Activated B cell treated with CpG ODN at 0.5 μM for 24 hours (primary cell): ENCODE measurements at regions of chr3 and their contacts with region 1.

Region 1: DNA sequence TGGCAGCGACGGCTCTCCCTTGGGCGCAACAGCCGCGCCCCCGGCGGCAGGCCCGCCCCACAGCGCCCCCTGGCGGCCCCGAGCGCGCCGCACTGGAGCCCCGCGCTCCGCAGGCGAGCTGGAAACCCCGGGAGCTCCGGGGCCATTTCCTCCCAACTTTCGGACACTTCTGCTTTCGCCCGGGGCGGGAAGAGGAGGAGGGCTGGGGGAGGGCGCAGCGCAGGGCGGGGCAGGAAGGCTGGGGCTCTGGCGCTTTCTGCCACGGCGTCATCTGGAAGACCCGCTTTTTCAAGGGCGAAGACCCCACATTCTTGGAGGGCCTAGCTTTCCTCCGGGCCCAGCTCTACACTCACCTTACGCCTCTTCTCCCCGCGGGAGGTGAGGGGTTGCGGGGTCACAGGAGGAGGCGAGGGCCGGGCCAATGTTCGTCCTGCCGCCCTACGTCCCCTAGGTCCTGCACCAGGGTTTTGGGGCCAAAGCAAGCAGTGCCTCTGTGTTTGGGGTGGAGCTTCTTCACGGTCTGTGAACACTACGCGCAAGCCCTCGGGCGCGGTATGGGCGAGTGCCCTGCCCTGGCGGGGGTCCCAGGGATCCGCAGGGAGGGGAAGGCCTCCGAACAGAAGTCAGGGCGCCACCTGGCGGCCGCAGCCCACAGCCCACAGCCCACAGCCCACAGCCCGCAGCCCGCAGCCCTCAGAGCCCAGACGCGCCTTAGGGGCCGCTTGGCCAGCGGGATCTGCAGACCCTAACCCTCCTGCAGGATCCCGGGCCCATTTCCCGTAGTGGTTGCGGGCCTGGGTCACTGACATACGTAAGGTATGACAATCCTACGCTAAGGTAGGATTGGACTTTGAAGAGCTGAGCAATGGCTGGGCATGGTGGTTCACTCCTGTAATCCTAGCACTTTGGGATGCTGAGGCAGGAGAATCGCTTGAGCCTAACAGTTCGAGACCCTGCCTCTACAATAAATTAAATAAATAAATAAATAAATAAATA is 31.1 kb downstream of the FOXL2 start:
- DNase-seq: peak; percentile 84
- ATAC-seq: peak; percentile 86
- H3K4me3 Mint-ChIP-seq: peak overlapping the region; percentile 83
- H3K27ac Mint-ChIP-seq: peak overlapping the region; percentile 75
- H3K4me1 Mint-ChIP-seq: peaks cover 5% of the 10 kb centered on the region
- H3K27me3 Mint-ChIP-seq: peaks cover 6% of the 10 kb centered on the region
- CTCF ChIP-seq: peak; percentile 78

Region 2: GRCh38 chr3:138389841-138390586 is 525.8 kb before region 1 on chr3:
- CTCF ChIA-PET with region 1: no interaction called
- POLR2A ChIA-PET with region 1: no interaction called
- intact Hi-C with region 1: no loop called
- DNase-seq: no peak
- ATAC-seq: no peak
- H3K4me3 Mint-ChIP-seq: no peak overlapping the region
- H3K27ac Mint-ChIP-seq: no peak overlapping the region
- H3K4me1 Mint-ChIP-seq: no peaks in the 10 kb centered on the region
- H3K27me3 Mint-ChIP-seq: peaks cover 31% of the 10 kb centered on the region
- CTCF ChIP-seq: no peak

Region 3: GRCh38 chr3:138479438-138479863 is 436.4 kb before region 1 on chr3:
- CTCF ChIA-PET with region 1: interaction called, 15 read pairs
- POLR2A ChIA-PET with region 1: no interaction called
- intact Hi-C with region 1: loop called (anchors 1 kb)
- DNase-seq: no peak
- ATAC-seq: peak; percentile 34
- H3K4me3 Mint-ChIP-seq: no peak overlapping the region
- H3K27ac Mint-ChIP-seq: no peak overlapping the region
- H3K4me1 Mint-ChIP-seq: no peaks in the 10 kb centered on the region
- H3K27me3 Mint-ChIP-seq: peaks cover 12% of the 10 kb centered on the region
- CTCF ChIP-seq: no peak

Region 4: DNA sequence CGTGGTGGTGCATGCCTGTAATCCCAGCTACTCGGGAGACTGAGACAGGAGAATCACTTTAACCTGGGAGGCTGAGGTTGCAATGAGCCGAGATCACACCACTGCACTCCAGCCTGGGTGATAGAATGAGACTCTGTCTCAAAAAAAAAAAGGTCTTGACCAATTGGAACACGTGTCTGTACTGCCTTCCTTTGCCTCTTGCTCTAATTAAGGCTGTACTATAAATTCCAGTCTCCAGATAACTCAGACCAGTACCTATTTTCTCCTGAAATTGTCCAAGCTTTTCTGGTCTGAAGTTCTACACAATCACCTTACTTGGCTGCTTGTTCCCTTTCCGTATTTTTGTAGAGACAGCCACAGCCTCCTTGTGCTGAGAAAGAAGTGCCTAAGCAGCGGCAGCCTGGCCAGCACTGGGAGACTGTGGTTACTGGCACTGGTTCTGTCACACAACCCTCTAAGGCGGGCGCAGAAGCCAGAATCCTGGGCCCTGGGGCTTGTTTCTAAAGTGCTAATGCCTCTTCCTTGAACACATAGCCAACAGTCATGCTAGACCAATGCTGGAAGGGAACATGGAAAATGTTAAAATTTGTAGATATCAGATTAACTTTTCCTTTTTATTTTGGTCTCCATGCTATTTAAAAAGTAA is 315.6 kb before region 1 on chr3:
- CTCF ChIA-PET with region 1: interaction called, 216 read pairs
- POLR2A ChIA-PET with region 1: interaction called, 27 read pairs
- intact Hi-C with region 1: no loop called
- DNase-seq: no peak
- ATAC-seq: no peak
- H3K4me3 Mint-ChIP-seq: no peak overlapping the region
- H3K27ac Mint-ChIP-seq: no peak overlapping the region
- H3K4me1 Mint-ChIP-seq: no peaks in the 10 kb centered on the region
- H3K27me3 Mint-ChIP-seq: no peaks in the 10 kb centered on the region
- CTCF ChIP-seq: no peak

Region 5: GRCh38 chr3:138686771-138687221 is 229.0 kb before region 1 on chr3:
- CTCF ChIA-PET with region 1: interaction called, 79 read pairs
- POLR2A ChIA-PET with region 1: interaction called, 6 read pairs
- intact Hi-C with region 1: loop called (anchors 1 kb)
- DNase-seq: no peak
- ATAC-seq: peak; percentile 77
- H3K4me3 Mint-ChIP-seq: peak overlapping the region; percentile 44
- H3K27ac Mint-ChIP-seq: peak overlapping the region; percentile 92
- H3K4me1 Mint-ChIP-seq: peaks cover 38% of the 10 kb centered on the region
- H3K27me3 Mint-ChIP-seq: no peaks in the 10 kb centered on the region
- CTCF ChIP-seq: no peak

Region 6: DNA sequence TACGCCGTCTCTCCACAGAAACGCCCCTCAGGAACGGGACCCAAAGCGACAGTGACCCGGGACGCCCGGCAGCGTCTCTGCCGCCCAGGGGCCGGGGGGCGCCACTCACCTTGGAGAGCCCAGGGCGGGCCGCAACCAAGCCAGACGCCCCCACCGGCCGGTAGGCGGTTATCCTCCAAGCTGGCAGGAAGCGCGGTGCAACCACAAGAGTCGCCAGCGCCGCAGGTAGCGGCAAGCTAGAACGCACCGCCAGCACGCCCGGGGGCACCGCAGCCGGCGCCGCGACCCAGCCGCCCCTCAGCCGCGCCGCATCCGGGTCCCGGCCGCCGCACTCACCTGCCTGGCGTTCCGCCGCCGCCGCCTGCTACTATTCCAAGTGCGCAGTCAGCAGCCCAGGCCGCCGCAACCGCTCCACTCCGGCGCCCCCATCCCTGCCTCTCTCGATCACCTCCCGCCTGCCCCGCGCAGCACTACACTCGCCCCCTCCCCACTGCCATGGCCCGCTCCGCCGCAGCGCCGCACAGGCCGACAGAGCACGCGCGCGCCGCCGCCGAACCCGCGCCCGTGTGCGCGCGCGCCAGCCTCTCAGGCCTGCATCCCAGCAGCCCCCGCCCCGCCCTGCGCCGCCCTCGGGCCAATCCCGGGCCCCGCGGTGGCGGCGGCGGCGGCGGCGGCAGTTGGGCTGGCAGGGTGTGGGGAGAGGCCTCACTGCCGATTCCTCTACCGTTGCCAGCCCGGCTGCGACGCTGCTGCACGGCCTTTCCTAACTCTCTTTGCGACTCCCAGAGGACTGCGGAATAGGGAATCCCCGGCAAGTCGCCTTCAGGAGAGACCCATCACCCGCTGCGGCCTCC is 81.2 kb before region 1 on chr3 and contains the start of gene PIK3CB:
- CTCF ChIA-PET with region 1: interaction called, 8 read pairs
- POLR2A ChIA-PET with region 1: interaction called, 3 read pairs
- intact Hi-C with region 1: loop called (anchors 1 kb)
- DNase-seq: peak; percentile 85
- ATAC-seq: peak; percentile 94
- H3K4me3 Mint-ChIP-seq: peak within 1 kb of the TSS; percentile 92
- H3K27ac Mint-ChIP-seq: peak within 1 kb of the TSS; percentile 95
- H3K4me1 Mint-ChIP-seq: peaks cover 24% of the 10 kb centered on the region
- H3K27me3 Mint-ChIP-seq: no peaks in the 10 kb centered on the region
- CTCF ChIP-seq: no peak
- total RNA-seq, gene PIK3CB: 19.9 and 21.9 TPM in 2 replicates

Region 7: GRCh38 chr3:138935848-138936740 is 20.3 kb after region 1 on chr3:
- CTCF ChIA-PET with region 1: interaction called, 11 read pairs
- POLR2A ChIA-PET with region 1: no interaction called
- intact Hi-C with region 1: no loop called
- DNase-seq: peak; percentile 70
- ATAC-seq: peak; percentile 89
- H3K4me3 Mint-ChIP-seq: peak overlapping the region; percentile 76
- H3K27ac Mint-ChIP-seq: no peak overlapping the region
- H3K4me1 Mint-ChIP-seq: peaks cover 35% of the 10 kb centered on the region
- H3K27me3 Mint-ChIP-seq: peaks cover 65% of the 10 kb centered on the region
- CTCF ChIP-seq: peak; percentile 67